Activated CD8-positive, alpha-beta T cell treated with anti-CD3 and anti-CD28 coated beads for 36 hours (primary cell): ENCODE measurements at regions of chr19 and their contacts with region 1.

Region 1: DNA sequence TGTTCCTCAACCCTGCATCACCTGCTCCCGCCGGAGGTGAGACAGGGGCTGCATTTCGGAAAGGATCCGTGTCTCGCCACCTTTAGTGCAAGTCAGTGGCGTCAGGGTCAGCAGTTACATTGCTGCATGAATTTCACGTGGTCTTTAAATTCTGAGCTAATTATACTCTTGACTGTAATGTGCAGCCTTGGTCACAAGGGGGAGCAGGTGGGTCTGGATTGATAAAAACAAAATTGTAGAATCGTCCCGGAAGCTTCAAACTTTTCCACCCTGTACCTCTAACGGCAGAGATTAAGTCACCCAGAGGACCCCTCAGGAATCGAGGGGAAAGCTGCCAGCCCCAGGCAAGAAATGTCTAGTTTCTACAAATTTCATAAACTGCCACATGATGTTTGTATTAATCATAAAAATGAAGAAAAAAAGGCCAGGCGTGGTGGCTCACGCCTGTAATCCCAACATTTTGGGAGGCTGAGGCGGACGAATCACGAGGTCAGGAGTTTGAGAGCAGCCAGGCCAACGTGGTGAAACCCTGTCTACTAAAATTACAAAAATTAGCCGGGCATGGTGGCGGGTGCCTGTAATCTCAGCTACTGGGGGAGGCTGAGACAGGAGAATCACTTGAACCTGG is 20.2 kb downstream of the BBC3 start:
- DNase-seq: peak; percentile 95
- ATAC-seq: peak; percentile 97
- H3K4me3 Mint-ChIP-seq: no peak overlapping the region
- H3K27ac Mint-ChIP-seq: peak overlapping the region; percentile 83
- H3K4me1 Mint-ChIP-seq: peaks cover 14% of the 10 kb centered on the region
- H3K27me3 Mint-ChIP-seq: no peaks in the 10 kb centered on the region
- CTCF ChIP-seq: peak; percentile 85

Region 2: DNA sequence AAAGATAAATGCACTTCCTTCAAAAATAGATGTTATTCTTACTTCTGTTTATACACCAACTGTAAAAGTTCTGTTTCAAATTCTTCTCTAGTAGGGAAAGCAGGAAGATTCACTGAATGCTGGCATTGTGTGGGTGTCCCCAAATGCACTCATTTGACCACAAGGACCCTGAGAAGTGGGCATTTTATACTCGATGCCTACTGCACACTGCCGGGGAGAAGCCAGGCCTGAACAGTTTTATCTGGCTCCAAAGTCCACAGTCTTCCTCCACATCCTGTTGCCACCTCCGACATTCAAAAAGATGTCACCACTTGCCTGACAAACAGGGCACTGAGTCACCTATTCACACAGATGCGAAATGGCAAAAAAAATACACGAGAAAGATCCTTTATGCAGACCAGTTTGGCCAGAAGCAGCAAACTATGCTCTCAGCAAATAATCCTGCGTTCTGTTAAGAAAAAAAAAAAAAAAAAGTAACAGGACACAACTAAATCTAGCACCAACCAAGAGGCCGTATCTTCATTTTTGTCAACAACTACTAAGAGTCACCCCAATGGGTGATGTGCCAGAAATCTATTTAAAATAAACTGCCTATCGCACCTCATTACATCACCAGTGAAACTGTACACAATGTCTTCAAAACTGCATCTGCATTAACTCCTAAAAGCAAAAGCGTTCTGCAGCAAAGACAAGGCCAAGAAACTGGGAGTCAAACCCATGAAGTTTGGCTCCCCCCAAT is 103.4 kb before region 1 on chr19:
- CTCF ChIA-PET with region 1: no interaction called
- POLR2A ChIA-PET with region 1: no interaction called
- intact Hi-C with region 1: no loop called
- DNase-seq: peak; percentile 67
- ATAC-seq: peak; percentile 46
- H3K4me3 Mint-ChIP-seq: peak overlapping the region; percentile 89
- H3K27ac Mint-ChIP-seq: peak overlapping the region; percentile 99
- H3K4me1 Mint-ChIP-seq: peaks cover 59% of the 10 kb centered on the region
- H3K27me3 Mint-ChIP-seq: no peaks in the 10 kb centered on the region
- CTCF ChIP-seq: no peak

Region 3: DNA sequence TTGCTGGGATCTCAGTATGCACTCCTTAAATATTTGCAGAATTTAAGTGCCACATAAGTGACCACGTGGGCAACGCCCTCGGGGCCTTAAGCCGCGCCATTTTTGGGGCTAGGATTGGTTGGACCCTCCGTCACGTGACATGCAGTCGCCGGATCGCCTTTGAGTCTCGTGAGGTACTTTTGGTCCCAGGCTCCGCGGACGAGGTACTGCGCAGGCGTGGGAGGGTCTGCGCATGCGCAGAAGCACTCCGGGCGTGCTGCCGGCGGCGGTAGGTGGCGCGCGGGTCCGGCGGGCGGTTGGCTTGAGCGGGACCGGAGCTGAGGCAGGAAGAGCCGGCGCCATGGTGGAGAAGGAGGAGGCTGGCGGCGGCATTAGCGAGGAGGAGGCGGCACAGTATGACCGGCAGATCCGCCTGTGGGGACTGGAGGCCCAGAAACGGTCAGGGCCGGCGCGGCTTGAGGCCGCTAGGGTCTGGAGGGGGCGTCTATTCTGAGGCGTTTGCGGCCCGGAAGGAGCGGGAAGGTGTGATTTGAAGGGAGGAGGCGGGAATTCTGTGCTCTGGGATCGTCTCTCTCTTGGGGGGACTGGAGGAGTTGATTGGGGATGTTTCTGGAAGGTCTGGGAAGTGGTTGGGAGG is 80.1 kb before region 1 on chr19 and contains the start of gene SAE1:
- CTCF ChIA-PET with region 1: interaction called, 18 read pairs
- POLR2A ChIA-PET with region 1: interaction called, 8 read pairs
- intact Hi-C with region 1: no loop called
- DNase-seq: peak; percentile 93
- ATAC-seq: peak; percentile 91
- H3K4me3 Mint-ChIP-seq: peak within 1 kb of the TSS; percentile 100
- H3K27ac Mint-ChIP-seq: peak within 1 kb of the TSS; percentile 100
- H3K4me1 Mint-ChIP-seq: peaks cover 37% of the 10 kb centered on the region
- H3K27me3 Mint-ChIP-seq: peaks cover 2% of the 10 kb centered on the region
- CTCF ChIP-seq: peak; percentile 51
- total RNA-seq, gene SAE1: 125 to 127 TPM

Region 4: GRCh38 chr19:47157431-47158321 is 53.1 kb before region 1 on chr19:
- CTCF ChIA-PET with region 1: interaction called, 44 read pairs
- POLR2A ChIA-PET with region 1: interaction called, 4 read pairs
- intact Hi-C with region 1: no loop called
- DNase-seq: peak; percentile 60
- ATAC-seq: peak; percentile 18
- H3K4me3 Mint-ChIP-seq: peak overlapping the region; percentile 40
- H3K27ac Mint-ChIP-seq: peak overlapping the region; percentile 86
- H3K4me1 Mint-ChIP-seq: peaks cover 65% of the 10 kb centered on the region
- H3K27me3 Mint-ChIP-seq: no peaks in the 10 kb centered on the region
- CTCF ChIP-seq: no peak

Region 5: GRCh38 chr19:47190167-47190727 is 20.6 kb before region 1 on chr19:
- CTCF ChIA-PET with region 1: interaction called, 37 read pairs
- POLR2A ChIA-PET with region 1: interaction called, 5 read pairs
- intact Hi-C with region 1: no loop called
- DNase-seq: peak; percentile 88
- ATAC-seq: peak; percentile 40
- H3K4me3 Mint-ChIP-seq: peak overlapping the region; percentile 45
- H3K27ac Mint-ChIP-seq: peak overlapping the region; percentile 84
- H3K4me1 Mint-ChIP-seq: peaks cover 62% of the 10 kb centered on the region
- H3K27me3 Mint-ChIP-seq: no peaks in the 10 kb centered on the region
- CTCF ChIP-seq: no peak

Region 6: DNA sequence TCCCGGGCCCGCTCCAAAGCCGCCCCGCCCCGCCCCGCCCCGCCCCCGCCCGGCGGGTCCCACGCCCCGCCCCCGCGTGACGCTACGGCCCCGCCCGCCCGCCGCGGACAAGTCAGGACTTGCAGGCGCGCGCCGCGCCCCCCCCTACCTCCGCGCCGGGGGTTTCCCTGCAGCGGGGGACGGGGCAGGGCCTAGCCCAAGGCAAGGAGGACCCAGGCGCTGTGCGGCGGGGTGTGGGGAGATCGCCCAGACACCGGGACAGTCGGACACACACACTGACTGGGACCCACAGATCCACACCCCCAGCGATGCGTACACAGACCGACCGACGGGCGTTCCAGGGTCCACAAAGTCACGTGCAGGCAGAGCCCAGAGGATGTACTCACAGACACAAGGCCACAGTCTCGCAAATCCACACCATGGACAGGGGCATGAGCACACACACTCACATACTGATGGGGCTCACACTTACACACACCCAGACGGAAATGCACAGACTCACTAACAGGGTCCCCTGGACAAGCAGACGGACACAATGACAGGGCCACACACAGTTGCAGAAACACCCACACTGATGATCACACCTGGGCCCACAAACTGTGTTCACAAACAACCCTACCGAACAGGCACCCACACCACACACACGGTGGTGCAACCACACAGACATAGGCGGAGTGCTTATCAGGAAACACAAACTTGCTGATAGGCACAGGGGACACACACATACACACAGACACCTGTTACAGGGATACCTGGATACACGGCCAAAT is 20.6 kb after region 1 on chr19:
- CTCF ChIA-PET with region 1: interaction called, 65 read pairs
- POLR2A ChIA-PET with region 1: interaction called, 19 read pairs
- intact Hi-C with region 1: no loop called
- DNase-seq: peak; percentile 93
- ATAC-seq: peak; percentile 59
- H3K4me3 Mint-ChIP-seq: peak overlapping the region; percentile 65
- H3K27ac Mint-ChIP-seq: peak overlapping the region; percentile 72
- H3K4me1 Mint-ChIP-seq: peaks cover 20% of the 10 kb centered on the region
- H3K27me3 Mint-ChIP-seq: no peaks in the 10 kb centered on the region
- CTCF ChIP-seq: no peak

Region 7: DNA sequence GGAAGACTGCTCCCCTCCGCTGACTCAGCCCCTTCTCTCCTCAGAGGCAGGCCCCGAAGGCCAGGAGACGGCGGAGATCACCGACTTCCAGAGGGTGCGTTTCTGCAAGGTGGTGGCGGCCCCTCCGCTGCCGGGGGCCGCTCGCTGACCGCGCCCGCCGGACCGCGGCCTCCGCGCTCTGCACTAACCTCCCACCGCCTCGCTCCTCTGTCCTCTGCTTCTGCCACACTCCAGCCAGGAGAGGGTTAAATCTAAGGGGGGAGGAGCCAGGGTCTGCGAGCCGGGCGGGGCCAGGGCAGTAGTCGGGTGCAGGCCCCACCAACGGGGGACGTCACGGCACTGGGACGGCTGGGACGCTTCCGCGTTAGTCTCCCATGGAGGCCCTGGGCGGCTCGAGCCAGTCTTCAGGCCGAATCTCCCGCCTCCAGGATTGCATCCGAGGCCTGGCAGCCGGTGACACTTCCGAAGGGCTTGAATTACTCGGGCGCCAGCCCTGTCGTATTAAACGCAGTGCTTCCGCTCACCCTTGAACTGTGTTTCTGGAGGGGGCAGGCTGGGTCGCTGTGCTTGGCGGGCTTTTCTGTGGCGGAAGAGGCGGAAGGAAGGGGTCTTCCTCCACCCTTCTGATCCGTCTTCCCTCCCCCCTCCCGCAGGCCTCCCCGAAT is 62.6 kb after region 1 on chr19:
- CTCF ChIA-PET with region 1: interaction called, 10 read pairs
- POLR2A ChIA-PET with region 1: no interaction called
- intact Hi-C with region 1: no loop called
- DNase-seq: peak; percentile 93
- ATAC-seq: peak; percentile 69
- H3K4me3 Mint-ChIP-seq: peak overlapping the region; percentile 92
- H3K27ac Mint-ChIP-seq: peak overlapping the region; percentile 99
- H3K4me1 Mint-ChIP-seq: peaks cover 26% of the 10 kb centered on the region
- H3K27me3 Mint-ChIP-seq: no peaks in the 10 kb centered on the region
- CTCF ChIP-seq: no peak